PC-9 (cell line): ENCODE measurements at regions of chr1 and their contacts with region 1.

Region 1: GRCh38 chr1:233372218-233373125 is 44.9 kb downstream of the MAP3K21 start:
- DNase-seq: no peak
- H3K4me3 ChIP-seq: no peak overlapping the region
- H3K27ac ChIP-seq: no peak overlapping the region
- H3K4me1 ChIP-seq: peaks cover 14% of the 10 kb centered on the region
- H3K27me3 ChIP-seq: no peaks in the 10 kb centered on the region
- CTCF ChIP-seq: no peak

Region 2: DNA sequence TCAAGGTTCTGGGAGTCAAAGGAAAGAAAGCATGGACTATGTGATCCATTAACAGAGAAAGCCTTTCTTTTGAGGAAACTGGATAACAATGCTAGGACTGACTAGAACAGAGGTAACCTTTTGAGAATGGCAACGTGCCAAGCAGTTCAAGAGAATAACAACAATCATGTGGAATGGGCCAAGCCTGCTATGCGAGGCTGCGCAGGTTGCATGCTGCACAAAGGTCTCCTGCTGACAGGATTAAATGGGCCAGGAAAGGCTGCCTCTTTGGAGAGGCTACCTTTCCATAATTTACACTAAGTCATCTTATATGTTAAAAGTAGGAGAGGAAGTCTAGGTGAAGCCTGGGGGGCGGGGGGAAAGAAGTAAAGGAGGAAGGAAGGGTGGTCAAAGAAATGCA is 82.8 kb before region 1 on chr1:
- CTCF ChIA-PET with region 1: no interaction called
- POLR2A ChIA-PET with region 1: interaction called, 29 read pairs
- intact Hi-C with region 1: no loop called
- DNase-seq: no peak
- H3K4me3 ChIP-seq: no peak overlapping the region
- H3K27ac ChIP-seq: no peak overlapping the region
- H3K4me1 ChIP-seq: peaks cover 31% of the 10 kb centered on the region
- H3K27me3 ChIP-seq: no peaks in the 10 kb centered on the region
- CTCF ChIP-seq: no peak